ENCODE measurements at regions of chr21 and their contacts with region 1.

Region 1: GRCh38 chr21:45835301-45836267 is 146.0 kb upstream of the COL6A1 start:
- DNase-seq: no peak
- H3K4me3 ChIP-seq: no peak overlapping the region
- H3K27ac ChIP-seq: peak overlapping the region in 1 of 4 donors; percentile 11
- H3K4me1 ChIP-seq: peaks cover 0 to 5% (median 0%) of the 10 kb centered on the region in 4 donors
- H3K27me3 ChIP-seq: no peaks in the 10 kb centered on the region
- CTCF ChIP-seq: no peak
- EP300 ChIP-seq: no peak
- POLR2A ChIP-seq: no peak

Region 2: GRCh38 chr21:45209046-45209445 is 626.5 kb before region 1 on chr21:
- in situ Hi-C with region 1: no loop called
- intact Hi-C with region 1: no loop called
- DNase-seq: no peak
- H3K4me3 ChIP-seq: no peak overlapping the region
- H3K27ac ChIP-seq: no peak overlapping the region
- H3K4me1 ChIP-seq: peaks cover 0 to 4% (median 0%) of the 10 kb centered on the region in 4 donors
- H3K27me3 ChIP-seq: no peaks in the 10 kb centered on the region
- CTCF ChIP-seq: no peak
- EP300 ChIP-seq: no peak
- POLR2A ChIP-seq: no peak

Region 3: DNA sequence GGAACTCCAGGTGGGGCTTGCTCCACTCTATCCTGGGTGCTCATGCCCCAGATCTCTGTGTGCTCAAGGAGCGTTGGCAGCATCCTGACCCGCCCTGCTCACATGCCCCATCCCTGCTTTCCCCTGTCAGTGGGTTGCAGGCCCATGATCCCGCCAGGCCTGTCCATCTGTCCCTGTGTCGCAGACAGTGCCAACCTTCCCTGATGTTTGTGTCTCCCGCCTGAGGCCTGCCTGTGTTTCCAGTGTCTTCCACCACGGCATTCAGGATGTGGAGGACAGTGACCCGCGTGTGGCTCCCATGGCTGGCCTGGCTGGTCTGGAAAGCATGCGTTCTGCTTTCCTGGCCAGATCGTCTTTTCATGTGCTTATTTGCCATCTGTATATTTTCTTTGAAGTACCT is 109.1 kb before region 1 on chr21:
- in situ Hi-C with region 1: no loop called
- intact Hi-C with region 1: no loop called
- DNase-seq: no peak
- H3K4me3 ChIP-seq: no peak overlapping the region
- H3K27ac ChIP-seq: no peak overlapping the region
- H3K4me1 ChIP-seq: no peaks in the 10 kb centered on the region
- H3K27me3 ChIP-seq: no peaks in the 10 kb centered on the region
- CTCF ChIP-seq: no peak
- EP300 ChIP-seq: no peak
- POLR2A ChIP-seq: no peak

Region 4: GRCh38 chr21:45856422-45856821 is 20.8 kb after region 1 on chr21:
- in situ Hi-C with region 1: no loop called
- intact Hi-C with region 1: loop called (anchors 1 kb)
- DNase-seq: no peak
- H3K4me3 ChIP-seq: no peak overlapping the region
- H3K27ac ChIP-seq: no peak overlapping the region
- H3K4me1 ChIP-seq: no peaks in the 10 kb centered on the region
- H3K27me3 ChIP-seq: no peaks in the 10 kb centered on the region
- CTCF ChIP-seq: no peak
- EP300 ChIP-seq: no peak
- POLR2A ChIP-seq: no peak

Region 5: DNA sequence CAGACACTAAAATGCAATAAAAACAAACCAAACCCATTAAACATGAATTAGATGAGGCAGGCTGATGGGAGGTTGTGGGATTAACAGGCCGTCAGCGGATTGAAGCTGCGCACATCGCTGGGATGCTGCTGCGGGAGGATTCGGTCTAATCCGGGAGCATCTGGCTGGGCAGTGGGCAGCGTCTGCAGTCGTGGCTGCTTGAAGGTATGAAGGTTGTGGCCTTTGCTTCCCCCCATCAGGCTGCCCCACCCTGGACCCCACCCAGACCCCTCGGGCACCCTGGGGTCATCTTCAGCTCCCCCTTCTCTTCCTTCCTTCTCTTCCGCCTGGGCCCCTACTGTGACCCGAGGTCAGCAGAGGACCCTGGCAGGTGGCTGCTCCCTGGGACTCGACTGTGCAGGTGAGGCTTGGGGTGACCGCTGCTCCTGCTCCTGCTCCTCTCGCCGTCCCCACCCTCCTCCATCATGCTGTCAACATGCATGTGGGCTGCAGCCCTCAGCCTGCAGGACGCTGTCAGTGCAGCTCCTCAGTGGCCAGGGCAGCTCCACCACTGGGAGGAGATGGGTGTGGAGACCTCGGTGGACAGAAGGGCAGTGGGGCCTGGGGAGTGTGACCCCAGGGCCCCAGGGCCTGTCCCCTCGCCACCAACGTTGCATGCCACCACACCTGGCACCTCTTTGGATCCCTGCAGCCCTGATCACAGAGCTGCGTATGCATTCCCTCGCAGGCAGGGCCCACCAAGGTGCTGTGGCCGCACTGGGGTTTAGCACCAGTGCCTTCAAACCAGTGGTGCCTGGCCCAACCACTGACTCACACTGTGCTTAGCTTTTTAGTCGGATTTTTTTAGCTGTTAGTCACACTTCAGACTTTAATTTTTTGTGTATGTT is 33.8 kb after region 1 on chr21:
- in situ Hi-C with region 1: no loop called
- intact Hi-C with region 1: no loop called
- DNase-seq: no peak
- H3K4me3 ChIP-seq: no peak overlapping the region
- H3K27ac ChIP-seq: no peak overlapping the region
- H3K4me1 ChIP-seq: no peaks in the 10 kb centered on the region
- H3K27me3 ChIP-seq: no peaks in the 10 kb centered on the region
- CTCF ChIP-seq: no peak
- EP300 ChIP-seq: no peak
- POLR2A ChIP-seq: no peak